Activated naive CD4-positive, alpha-beta T cell treated with anti-CD3 and anti-CD28 coated beads, Interleukin-2, amount 10 ng/mL, durations not matched to agents 7 days and 5 days (primary cell): ENCODE measurements at regions of chr17 and their contacts with region 1.

Region 1: GRCh38 chr17:63406689-63407330 is 39.3 kb downstream of the CYB561 start:
- DNase-seq: peak; percentile 80
- H3K4me3 Mint-ChIP-seq: no peak overlapping the region
- H3K27ac Mint-ChIP-seq: no peak overlapping the region
- H3K4me1 Mint-ChIP-seq: peaks cover 5% of the 10 kb centered on the region
- H3K27me3 Mint-ChIP-seq: no peaks in the 10 kb centered on the region

Region 2: GRCh38 chr17:62672957-62673356 is 733.9 kb before region 1 on chr17:
- CTCF ChIA-PET with region 1: interaction called, 10 read pairs
- DNase-seq: no peak
- H3K4me3 Mint-ChIP-seq: no peak overlapping the region
- H3K27ac Mint-ChIP-seq: no peak overlapping the region
- H3K4me1 Mint-ChIP-seq: peaks cover 3% of the 10 kb centered on the region
- H3K27me3 Mint-ChIP-seq: peaks cover 13% of the 10 kb centered on the region

Region 3: GRCh38 chr17:62995377-62995885 is 411.4 kb before region 1 on chr17:
- CTCF ChIA-PET with region 1: interaction called, 18 read pairs
- DNase-seq: peak; percentile 27
- H3K4me3 Mint-ChIP-seq: no peak overlapping the region
- H3K27ac Mint-ChIP-seq: no peak overlapping the region
- H3K4me1 Mint-ChIP-seq: no peaks in the 10 kb centered on the region
- H3K27me3 Mint-ChIP-seq: no peaks in the 10 kb centered on the region

Region 4: DNA sequence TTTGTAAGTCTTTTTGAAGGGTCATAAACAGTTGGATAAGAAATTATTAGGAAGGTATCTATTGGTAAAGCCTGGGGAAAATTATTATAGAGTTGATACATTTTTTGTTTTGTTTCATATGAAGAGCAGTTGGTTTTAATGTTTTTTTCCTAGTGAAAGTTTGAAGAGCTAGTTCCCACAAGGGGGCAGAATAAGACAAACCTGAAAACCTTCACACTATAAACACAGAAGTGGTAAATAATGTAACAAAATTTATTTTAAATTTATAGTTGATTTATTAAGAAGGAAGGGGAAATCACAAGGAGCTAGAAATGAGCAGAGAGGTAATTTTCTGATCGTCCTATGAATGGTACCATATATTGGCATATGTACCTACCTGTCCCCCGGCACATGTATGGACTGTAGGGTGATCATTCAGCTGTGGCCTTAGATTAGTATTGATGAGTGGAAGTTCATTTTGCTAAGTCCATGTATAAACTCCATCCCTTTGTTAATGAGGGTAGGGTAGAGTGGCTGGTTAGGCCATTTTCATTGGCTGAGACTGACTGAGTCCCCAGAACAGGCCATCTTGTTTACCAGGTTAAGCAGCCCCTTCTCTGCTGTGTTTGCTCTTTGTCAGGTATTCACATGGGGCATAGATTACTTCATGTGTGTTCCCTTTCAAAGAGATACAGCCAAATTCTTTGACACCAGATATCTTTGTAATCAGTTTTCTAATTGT is 324.4 kb before region 1 on chr17:
- CTCF ChIA-PET with region 1: interaction called, 31 read pairs
- DNase-seq: no peak
- H3K4me3 Mint-ChIP-seq: no peak overlapping the region
- H3K27ac Mint-ChIP-seq: no peak overlapping the region
- H3K4me1 Mint-ChIP-seq: no peaks in the 10 kb centered on the region
- H3K27me3 Mint-ChIP-seq: no peaks in the 10 kb centered on the region

Region 5: GRCh38 chr17:63419949-63420867 is 13.4 kb after region 1 on chr17:
- CTCF ChIA-PET with region 1: interaction called, 28 read pairs
- DNase-seq: peak; percentile 78
- H3K4me3 Mint-ChIP-seq: no peak overlapping the region
- H3K27ac Mint-ChIP-seq: peak overlapping the region; percentile 83
- H3K4me1 Mint-ChIP-seq: peaks cover 32% of the 10 kb centered on the region
- H3K27me3 Mint-ChIP-seq: peaks cover 49% of the 10 kb centered on the region

Region 6: GRCh38 chr17:63425482-63425881 is 18.7 kb after region 1 on chr17:
- CTCF ChIA-PET with region 1: interaction called, 28 read pairs
- DNase-seq: peak; percentile 82
- H3K4me3 Mint-ChIP-seq: no peak overlapping the region
- H3K27ac Mint-ChIP-seq: no peak overlapping the region
- H3K4me1 Mint-ChIP-seq: peaks cover 59% of the 10 kb centered on the region
- H3K27me3 Mint-ChIP-seq: peaks cover 34% of the 10 kb centered on the region